PC-9 (cell line): ENCODE measurements at regions of chr3 and their contacts with region 1.

Region 1: DNA sequence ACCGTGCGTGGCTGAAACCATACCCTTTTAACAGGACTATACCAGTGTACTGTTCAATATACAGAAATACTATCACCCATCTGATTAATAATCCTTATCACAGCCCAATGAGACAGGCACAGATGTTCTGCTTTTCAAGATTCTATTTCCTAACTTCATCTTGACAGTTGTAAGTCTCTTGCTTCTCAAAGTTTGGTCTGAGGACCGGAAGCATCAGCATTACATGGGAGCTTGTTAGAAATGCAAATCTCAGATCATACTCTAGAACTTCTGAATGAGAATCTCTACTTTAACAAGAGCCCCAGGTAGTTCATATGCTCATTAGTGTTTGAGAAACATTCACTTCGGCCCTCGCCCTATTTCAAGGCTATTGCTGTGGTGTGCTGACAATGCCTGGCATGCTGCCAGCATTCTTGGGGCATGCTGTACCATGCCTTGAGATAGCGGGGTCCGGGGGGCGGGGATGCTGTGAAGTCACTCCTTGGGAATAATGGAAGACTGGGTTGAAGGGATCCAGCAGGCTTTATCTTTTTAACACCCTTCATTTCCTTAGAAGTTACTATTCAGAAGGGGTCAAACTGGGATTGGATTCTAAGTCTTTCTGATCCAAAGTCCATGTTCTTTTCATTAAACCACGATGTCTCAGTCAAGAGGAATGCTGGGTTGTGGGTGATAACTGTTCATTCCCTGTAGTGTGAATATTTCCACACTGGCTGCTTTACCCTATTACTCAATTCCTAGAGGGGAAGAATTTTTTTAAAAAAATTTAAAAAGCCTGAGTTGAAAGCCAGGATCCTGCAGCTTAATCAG is 194.7 kb downstream of the LPP start:
- DNase-seq: peak; percentile 69 to 85
- H3K4me3 ChIP-seq: no peak overlapping the region
- H3K27ac ChIP-seq: peak overlapping the region; percentile 37
- H3K4me1 ChIP-seq: peaks cover 17% of the 10 kb centered on the region
- H3K27me3 ChIP-seq: no peaks in the 10 kb centered on the region
- CTCF ChIP-seq: no peak

Region 2: DNA sequence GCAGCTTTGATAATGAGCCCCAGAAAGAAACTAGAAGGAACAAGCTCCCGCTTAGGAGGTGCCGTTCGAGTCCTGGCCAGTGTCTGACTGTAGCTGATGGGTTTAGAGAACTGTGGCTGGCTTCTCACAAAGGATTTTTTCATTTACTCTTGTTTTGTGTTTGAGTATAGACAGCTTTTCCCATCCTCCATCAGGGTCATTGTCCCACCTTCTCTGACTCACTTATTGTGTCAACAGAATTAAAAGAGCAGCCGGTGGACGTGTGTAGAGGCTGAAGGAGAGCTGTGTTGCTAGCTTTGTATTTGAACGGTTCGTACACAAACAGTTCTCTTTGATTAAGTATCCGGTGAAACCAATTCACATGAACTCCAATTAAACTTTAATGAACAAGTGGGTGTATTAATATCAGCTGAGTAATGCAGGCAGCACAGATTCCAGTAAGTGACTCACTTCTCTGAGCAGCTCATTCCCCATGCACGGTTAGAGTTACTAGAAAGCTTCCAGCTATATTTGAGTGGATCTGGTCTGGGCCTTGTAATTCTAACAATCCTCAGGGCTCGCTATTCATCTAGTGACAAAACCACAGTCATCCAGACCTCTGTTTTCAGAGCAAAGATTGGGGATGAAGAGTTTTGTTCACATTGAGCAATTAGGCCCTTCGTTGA is 53.7 kb before region 1 on chr3:
- CTCF ChIA-PET with region 1: no interaction called
- POLR2A ChIA-PET with region 1: interaction called, 11 read pairs
- intact Hi-C with region 1: loop called (anchors 2 kb)
- DNase-seq: peak; percentile 63 to 99
- H3K4me3 ChIP-seq: peak overlapping the region; percentile 8; the same call in 1 of the 2 replicates
- H3K27ac ChIP-seq: peak overlapping the region; percentile 77
- H3K4me1 ChIP-seq: peaks cover 55% of the 10 kb centered on the region
- H3K27me3 ChIP-seq: no peaks in the 10 kb centered on the region
- CTCF ChIP-seq: no peak

Region 3: DNA sequence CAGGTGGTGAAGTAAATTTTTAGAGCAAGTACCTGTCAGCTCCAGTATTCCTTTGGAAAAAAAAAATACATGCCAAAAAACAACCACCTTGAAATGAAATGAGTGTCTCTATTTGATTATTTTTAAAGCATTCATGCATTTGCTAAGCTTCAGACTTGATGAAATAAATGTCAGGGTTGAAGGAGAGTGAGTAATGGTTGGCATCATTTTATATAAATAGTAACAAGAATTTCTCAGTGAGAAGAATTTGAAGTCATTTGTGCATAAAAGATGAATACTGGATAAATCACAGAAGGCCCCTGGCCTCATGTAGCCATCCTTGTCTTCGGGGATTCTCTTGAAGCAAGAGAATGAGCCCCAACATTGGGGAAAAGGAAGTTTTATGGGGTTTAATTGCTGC is 123.7 kb after region 1 on chr3:
- CTCF ChIA-PET with region 1: no interaction called
- POLR2A ChIA-PET with region 1: no interaction called
- intact Hi-C with region 1: no loop called
- DNase-seq: no peak
- H3K4me3 ChIP-seq: no peak overlapping the region
- H3K27ac ChIP-seq: no peak overlapping the region
- H3K4me1 ChIP-seq: no peaks in the 10 kb centered on the region; the same call in 1 of the 2 replicates
- H3K27me3 ChIP-seq: no peaks in the 10 kb centered on the region
- CTCF ChIP-seq: no peak